GM23248 (cell line): ENCODE measurements at regions of chr12 and their contacts with region 1.

Region 1: DNA sequence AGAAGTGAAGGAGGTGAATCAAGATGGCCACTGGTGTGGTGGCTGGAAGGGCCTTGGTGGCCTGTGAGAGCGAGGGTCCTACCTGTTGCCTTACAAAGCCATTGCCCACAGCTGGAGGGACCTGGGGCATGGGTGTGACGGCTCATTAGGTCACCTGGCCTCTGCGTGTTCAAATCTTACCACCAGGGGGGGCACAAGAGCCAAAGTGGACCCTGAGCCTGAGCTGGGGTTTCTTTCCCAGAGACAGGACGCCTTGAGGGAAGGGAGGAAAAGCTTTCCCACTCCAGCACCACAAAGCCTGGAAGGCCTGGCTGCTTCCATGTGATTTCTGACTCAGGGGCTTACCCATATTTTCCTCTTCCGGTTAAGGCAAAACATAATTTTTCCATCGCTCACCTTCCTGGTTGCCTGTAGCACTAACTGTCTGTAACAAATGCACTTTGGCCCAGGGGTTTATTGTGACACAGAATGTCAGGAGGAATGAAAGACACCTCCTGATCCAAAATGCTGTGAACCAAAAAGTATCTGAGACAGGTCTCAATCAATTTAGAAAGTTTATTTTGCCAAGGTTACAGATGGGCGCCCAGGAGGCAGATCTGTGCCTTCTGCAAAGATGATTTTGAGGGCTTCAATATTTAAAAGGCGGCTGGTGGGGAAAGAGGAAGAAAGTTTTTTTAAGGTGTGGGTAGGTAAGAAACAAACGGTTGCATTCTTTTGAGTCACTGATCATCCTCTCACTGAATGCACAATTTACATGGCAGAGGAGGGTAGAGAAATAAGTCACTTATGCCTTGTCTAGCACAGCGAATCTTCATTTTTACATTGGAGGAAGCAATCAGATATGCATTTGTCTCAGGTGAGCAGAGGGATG is 4.3 kb upstream of the CD9 start:
- DNase-seq: peak; percentile 92
- H3K4me3 ChIP-seq: no peak overlapping the region
- H3K27ac ChIP-seq: peak overlapping the region; percentile 27
- H3K4me1 ChIP-seq: peaks cover 3% of the 10 kb centered on the region; the same call in 1 of the 2 replicates
- H3K27me3 ChIP-seq: no peaks in the 10 kb centered on the region

Region 2: DNA sequence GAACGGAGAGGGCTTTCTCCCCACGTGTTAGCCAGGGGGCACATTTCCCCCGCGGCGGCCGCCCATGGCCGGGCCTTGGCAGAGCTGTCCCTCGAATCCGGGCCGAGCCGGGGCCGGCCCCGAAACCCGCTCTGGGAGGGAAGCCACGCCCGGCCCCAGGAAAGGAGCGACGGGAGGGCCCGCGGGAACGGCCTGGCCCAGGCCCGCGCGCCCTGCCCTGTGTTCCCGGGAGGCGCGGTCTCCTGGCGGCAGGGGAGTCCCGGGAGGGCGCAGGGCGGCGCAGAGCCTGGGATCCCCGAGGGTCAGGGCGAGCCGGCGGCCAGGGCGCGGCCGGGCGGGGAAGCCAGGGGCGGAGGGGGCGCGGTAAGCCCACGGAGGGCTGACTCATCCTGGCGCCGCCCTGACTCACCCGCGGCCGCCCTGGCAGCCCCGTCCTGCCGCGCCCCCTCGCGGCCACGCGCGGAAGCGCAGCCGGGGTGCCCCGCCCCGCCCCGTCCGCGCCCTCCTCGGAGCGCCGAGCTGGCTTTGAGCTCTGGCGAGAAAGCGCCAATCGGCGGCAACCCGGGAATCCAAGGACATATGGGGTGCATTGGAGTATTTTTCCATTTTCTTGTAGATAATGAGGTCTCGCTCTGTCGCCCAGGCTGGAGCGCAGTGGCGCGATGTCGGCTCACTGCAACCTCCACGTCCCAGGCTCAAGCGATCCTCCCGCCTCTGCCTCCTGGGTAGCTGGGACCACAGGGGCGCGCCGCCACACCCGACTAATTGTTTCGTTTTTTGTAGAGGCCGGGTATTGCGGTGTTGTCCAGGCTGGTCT is 82.7 kb after region 1 on chr12:
- in situ Hi-C with region 1: loop called (anchors 5 kb)
- DNase-seq: peak; percentile 95
- H3K4me3 ChIP-seq: peak overlapping the region; percentile 66
- H3K27ac ChIP-seq: peak overlapping the region; percentile 27
- H3K4me1 ChIP-seq: peaks cover 22% of the 10 kb centered on the region
- H3K27me3 ChIP-seq: no peaks in the 10 kb centered on the region

Region 3: DNA sequence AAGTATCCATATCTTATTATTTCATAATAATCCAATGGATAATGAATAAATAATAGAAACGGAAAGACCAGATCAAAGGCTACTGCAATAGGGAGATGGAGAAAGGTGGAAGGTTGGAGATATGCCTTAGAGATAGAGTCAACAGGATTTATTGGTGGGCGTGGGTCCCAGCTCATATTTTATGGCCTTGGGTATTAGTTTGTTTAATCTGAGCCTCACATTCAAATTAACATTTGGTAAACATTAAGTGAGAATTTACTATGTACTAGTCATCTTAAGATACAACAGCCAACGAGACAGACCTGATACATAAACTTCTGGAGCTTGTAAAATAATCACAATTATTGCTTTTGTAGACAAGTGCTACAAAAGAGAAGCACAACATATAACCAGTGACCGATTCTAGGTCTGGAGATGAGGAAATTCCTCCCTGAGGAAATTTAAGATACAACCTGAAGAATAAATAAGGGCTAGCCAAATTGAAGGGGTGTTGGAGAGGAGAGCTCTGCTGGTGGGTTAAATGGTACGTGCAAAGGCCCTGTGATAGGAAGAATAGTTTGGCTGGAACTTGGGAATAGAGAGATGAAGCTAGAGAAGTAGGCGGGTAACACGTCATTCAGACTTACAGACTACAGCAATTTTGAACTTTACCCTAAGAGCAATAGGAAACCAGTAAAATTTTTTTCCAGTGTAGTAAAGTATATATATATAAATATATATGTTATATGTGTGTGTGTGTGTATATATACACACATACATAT is 204.2 kb after region 1 on chr12:
- in situ Hi-C with region 1: no loop called
- DNase-seq: no peak
- H3K4me3 ChIP-seq: no peak overlapping the region
- H3K27ac ChIP-seq: no peak overlapping the region
- H3K4me1 ChIP-seq: no peaks in the 10 kb centered on the region
- H3K27me3 ChIP-seq: no peaks in the 10 kb centered on the region